Activated CD4-positive, alpha-beta memory T cell treated with anti-CD3 and anti-CD28 coated beads for 36 hours (primary cell): ENCODE measurements at regions of chr3 and their contacts with region 1.

Region 1: GRCh38 chr3:45995236-45996192 is at the start of gene FYCO1:
- DNase-seq: peak; percentile 93
- H3K4me3 Mint-ChIP-seq: peak within 1 kb of the TSS; percentile 85
- H3K27ac Mint-ChIP-seq: peak within 1 kb of the TSS; percentile 87
- H3K4me1 Mint-ChIP-seq: peaks cover 44% of the 10 kb centered on the region
- H3K27me3 Mint-ChIP-seq: no peaks in the 10 kb centered on the region
- total RNA-seq, gene FYCO1: 13.7 to 14.0 TPM

Region 2: DNA sequence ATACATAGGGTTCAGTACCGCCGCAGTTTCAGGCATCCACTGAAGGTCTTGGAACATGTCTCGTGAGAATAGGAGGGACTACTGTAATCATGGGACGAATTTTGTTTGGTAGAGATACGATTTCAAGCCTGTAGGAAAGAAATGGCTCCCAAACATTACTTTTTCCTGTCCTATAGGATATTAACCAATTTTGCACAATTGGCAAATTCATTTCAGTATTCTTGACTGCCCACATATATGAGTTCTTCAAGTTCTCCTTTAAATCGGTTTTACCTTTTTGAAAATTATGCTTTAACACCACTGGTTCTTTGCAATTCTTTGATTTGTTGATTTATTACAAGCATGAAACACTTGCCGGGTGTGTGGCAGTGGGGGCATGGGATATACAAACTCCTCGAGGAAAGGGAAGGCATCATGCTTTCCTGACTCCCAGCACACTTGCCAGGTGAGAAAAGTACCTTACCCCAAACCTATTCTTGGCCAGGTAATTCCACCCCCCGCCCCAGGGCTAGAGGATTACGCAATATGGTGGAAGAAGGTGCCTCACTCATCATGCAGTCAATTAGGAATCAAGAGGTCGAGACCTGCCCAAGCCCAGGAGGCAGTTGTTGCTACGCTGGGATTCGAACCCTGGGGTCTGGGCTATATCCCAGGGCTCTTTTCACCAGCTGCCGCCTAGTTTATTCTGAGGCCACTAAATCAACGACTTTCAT is 607.7 kb before region 1 on chr3:
- CTCF ChIA-PET with region 1: no interaction called
- POLR2A ChIA-PET with region 1: no interaction called
- intact Hi-C with region 1: no loop called
- DNase-seq: no peak
- H3K4me3 Mint-ChIP-seq: peak overlapping the region; percentile 93
- H3K27ac Mint-ChIP-seq: no peak overlapping the region
- H3K4me1 Mint-ChIP-seq: peaks cover 17% of the 10 kb centered on the region
- H3K27me3 Mint-ChIP-seq: peaks cover 3% of the 10 kb centered on the region

Region 3: GRCh38 chr3:45978006-45978761 is 17.3 kb before region 1 on chr3:
- CTCF ChIA-PET with region 1: interaction called, 4 read pairs
- POLR2A ChIA-PET with region 1: interaction called, 20 read pairs
- intact Hi-C with region 1: loop called (anchors 1 kb)
- DNase-seq: peak; percentile 87
- H3K4me3 Mint-ChIP-seq: peak overlapping the region; percentile 39
- H3K27ac Mint-ChIP-seq: peak overlapping the region; percentile 87
- H3K4me1 Mint-ChIP-seq: peaks cover 84% of the 10 kb centered on the region
- H3K27me3 Mint-ChIP-seq: no peaks in the 10 kb centered on the region

Region 4: DNA sequence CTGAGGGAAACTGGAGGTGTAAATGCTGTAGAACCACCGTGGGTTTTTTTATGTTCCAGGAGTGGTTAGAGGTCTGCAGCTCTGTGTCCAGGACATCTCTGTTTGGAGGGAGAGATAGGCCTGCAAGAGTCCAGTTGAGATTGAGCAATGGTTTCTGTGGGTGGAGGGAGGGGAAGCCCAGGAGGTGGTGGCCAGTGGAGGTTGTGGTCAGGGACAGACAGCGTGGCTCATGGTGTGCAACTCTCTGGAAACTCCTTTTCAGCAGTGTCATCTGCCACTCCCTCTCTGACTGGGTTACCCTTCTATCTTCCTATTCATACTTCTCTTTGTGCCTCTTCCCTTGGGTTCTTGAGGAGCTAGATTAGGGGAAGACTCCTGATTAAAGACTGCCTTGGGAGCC is 22.2 kb after region 1 on chr3:
- CTCF ChIA-PET with region 1: no interaction called
- POLR2A ChIA-PET with region 1: interaction called, 4 read pairs
- intact Hi-C with region 1: loop called (anchors 2 kb)
- DNase-seq: peak; percentile 44
- H3K4me3 Mint-ChIP-seq: no peak overlapping the region
- H3K27ac Mint-ChIP-seq: no peak overlapping the region
- H3K4me1 Mint-ChIP-seq: peaks cover 16% of the 10 kb centered on the region
- H3K27me3 Mint-ChIP-seq: peaks cover 8% of the 10 kb centered on the region

Region 5: DNA sequence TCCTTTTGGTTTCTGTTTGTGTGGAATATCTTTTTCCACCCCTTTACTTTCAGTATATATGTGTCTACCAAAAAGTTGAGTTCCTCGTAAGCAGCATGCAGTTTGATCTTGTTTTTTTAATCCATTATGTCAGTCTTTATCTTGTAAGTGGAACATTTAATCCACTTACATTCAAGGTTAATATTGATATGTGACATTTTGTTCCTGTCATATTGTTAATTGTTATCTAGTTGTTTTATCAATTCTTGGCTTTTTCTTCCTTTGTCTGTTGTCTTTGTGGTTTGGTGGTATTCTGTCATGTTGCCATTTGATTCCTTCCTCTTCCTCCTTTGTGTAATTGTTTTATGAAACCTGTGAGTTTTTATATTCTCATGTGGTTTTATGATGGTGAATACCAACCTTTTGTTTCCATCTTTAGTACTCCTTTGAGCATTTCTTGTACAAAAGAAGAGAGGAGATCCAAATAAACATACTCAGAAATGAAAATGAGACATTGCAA is 75.1 kb after region 1 on chr3:
- CTCF ChIA-PET with region 1: no interaction called
- POLR2A ChIA-PET with region 1: interaction called, 3 read pairs
- intact Hi-C with region 1: loop called (anchors 2 kb)
- DNase-seq: no peak
- H3K4me3 Mint-ChIP-seq: no peak overlapping the region
- H3K27ac Mint-ChIP-seq: peak overlapping the region; percentile 18
- H3K4me1 Mint-ChIP-seq: peaks cover 55% of the 10 kb centered on the region
- H3K27me3 Mint-ChIP-seq: peaks cover 27% of the 10 kb centered on the region

Region 6: DNA sequence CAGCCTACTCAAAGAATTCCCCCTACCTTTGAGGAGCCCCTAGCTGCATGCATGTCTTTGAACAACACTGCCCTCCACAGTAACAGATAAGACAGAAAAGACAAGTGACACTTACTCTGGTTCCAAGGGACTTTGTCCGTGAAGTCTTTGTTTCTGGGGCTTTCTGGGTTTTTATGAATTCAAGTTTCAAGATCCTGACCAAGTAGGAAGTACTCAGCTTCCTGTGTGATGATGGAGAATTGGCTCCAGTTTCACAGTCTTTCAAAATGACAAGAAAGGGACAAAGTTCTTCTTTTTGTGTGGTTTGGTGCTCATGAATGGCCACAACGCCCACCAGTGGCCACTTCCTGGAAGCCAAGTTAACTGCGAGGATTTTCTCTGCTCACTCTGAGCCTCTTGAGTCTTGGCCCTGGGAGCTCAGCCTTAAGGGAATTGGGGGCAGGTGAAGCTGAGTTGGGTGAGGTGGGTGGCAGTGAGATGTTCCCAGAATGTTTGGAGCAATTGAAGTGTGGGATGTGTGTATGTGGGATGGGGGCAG is 212.7 kb after region 1 on chr3 and contains the start of gene CCR1:
- CTCF ChIA-PET with region 1: no interaction called
- POLR2A ChIA-PET with region 1: no interaction called
- intact Hi-C with region 1: no loop called
- DNase-seq: peak; percentile 81
- H3K4me3 Mint-ChIP-seq: no peak within 1 kb of the TSS
- H3K27ac Mint-ChIP-seq: peak within 1 kb of the TSS; percentile 64
- H3K4me1 Mint-ChIP-seq: peaks cover 17% of the 10 kb centered on the region
- H3K27me3 Mint-ChIP-seq: peaks cover 1% of the 10 kb centered on the region
- total RNA-seq, gene CCR1: 0.80 to 1.3 TPM

Region 7: DNA sequence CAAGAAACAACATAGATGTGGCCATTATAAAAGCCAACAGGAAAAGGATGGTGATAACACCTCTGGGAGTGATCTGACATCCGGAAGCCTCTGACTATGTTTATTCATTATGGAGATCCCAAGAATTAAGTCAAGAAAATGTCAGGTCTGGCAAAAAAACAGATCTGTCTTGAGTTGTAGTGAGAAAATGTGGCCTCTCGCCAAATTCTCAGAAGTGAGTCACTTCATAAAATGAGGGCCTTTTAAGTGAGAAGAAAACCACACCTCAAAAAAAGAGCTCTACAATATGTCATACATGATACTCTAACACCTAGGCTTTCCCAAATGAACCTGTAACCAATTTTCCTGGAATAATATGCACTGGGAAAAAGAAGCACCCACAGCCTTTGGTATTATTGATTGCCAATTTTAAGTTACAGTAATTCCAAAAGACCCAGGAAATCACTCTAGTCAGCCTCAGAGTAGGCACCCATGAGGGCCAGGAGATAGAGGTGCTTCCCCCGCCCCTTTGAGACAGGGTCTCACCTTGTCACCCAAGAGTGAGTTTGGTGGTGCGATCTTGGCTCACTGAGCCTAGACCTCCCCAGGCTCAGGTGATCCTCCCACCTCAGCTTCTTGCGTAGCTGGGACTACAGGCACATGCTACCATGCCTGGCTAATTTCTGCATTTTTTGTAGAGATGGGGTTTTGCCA is 284.7 kb after region 1 on chr3:
- CTCF ChIA-PET with region 1: no interaction called
- POLR2A ChIA-PET with region 1: no interaction called
- intact Hi-C with region 1: no loop called
- DNase-seq: peak; percentile 72
- H3K4me3 Mint-ChIP-seq: no peak overlapping the region
- H3K27ac Mint-ChIP-seq: peak overlapping the region; percentile 67
- H3K4me1 Mint-ChIP-seq: peaks cover 78% of the 10 kb centered on the region
- H3K27me3 Mint-ChIP-seq: peaks cover 14% of the 10 kb centered on the region